Heart left ventricle (tissue), 16 donors: ENCODE measurements at regions of chr11 and their contacts with region 1.

Region 1: DNA sequence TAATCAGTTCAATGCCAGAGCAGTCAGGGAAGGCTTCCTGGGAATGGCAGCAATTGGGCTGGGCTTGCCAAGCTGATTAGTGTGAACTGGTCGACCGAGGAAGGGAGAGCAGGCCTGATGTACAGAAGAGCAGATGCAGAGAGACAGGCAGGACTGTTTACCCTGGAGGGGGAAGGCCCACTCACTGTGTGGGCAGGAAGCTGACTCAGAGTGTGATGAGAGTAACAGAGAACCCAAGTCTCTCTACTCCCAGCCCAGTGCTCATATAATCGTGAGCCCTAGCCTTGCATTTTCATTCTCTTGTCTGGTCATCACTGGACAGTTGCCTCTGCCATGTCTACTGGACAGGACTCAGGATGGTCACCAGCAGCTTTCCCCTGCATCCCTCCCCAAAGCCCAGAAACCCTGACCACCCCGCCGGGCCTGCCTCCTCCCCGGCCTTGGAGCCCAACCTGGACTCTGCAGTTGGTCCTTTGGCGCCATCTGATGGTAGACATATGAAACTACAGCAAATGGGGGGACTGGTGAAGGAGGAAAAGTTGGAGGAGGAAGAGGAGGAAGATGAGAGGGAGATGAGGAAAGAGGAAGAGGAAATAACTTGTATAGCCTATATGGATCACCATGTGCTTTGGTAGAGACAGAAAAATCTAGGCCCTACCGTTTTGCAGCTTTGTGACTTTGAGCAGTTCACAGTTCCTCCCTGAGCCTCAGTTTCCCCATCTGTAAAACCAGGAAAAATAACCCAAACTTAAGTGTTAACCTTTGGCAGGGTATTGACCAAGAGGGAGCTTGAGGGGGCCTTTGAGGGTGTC is 43.4 kb upstream of the PRDM11 start:
- DNase-seq: peak; percentile 58 to 81 (median 62)
- ATAC-seq: peak in 3 of 4 donors; percentile 62 to 81 (median 67)
- H3K4me3 ChIP-seq: no peak overlapping the region
- H3K27ac ChIP-seq: peak overlapping the region in 1 of 12 donors; percentile 66
- H3K4me1 ChIP-seq: peaks cover 0 to 25% (median 10%) of the 10 kb centered on the region in 12 donors
- H3K27me3 ChIP-seq: peaks cover 0 to 9% (median 0%) of the 10 kb centered on the region in 9 donors
- CTCF ChIP-seq: peak; percentile 85 to 99 (median 96)
- POLR2A ChIP-seq: no peak

Region 2: DNA sequence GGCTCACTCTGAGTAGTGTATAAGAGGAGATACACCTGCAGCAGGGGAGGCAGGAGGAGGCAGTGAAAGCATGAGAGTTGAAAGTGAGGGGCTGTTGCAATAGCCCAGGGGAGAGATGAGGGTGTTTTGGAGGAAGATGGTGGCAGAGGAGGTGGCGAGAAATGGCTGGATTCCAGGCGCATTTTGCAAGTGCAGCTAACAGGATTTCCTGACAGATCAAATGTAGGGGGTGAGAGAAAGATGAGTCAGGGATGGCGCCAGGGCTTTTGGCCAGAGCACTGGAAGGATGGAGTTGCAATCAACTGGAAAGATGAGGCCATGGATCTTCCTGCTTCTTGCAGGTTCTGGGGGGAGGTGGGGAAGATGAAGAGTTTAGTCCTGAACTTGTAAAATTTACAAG is 393.1 kb before region 1 on chr11:
- intact Hi-C with region 1: loop called in 1 of 10 experiments (anchors 10 kb)
- DNase-seq: no peak
- ATAC-seq: no peak
- H3K4me3 ChIP-seq: no peak overlapping the region
- H3K27ac ChIP-seq: no peak overlapping the region
- H3K4me1 ChIP-seq: peaks cover 0 to 7% (median 0%) of the 10 kb centered on the region in 12 donors
- H3K27me3 ChIP-seq: no peaks in the 10 kb centered on the region
- CTCF ChIP-seq: no peak
- POLR2A ChIP-seq: no peak

Region 3: DNA sequence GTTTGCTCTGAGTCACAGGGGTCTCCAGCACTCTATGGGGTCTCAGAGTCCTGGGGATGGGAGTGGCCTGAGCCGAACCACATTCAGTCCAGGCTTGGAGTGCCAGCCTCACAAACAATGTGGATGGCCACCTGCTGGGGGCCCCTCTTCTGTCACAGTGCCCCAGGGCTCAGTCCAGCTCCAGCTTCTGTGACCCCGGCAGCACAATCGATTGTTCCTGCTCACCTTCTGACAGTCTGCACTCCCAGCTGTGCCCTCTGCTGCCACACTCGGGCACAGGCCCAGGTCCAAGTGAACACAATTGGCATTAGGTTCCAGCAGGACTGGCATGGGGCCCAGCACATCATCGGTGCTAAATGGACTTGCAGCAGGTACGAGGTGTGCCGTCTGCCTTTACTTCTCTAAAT is 237.1 kb before region 1 on chr11:
- intact Hi-C with region 1: no loop called
- DNase-seq: peak; percentile 67 to 81 (median 78)
- ATAC-seq: peak; percentile 29 to 62 (median 52)
- H3K4me3 ChIP-seq: no peak overlapping the region
- H3K27ac ChIP-seq: peak overlapping the region in 9 of 12 donors; percentile 41 to 79 (median 60)
- H3K4me1 ChIP-seq: peaks cover 0 to 54% (median 20%) of the 10 kb centered on the region in 12 donors
- H3K27me3 ChIP-seq: no peaks in the 10 kb centered on the region
- CTCF ChIP-seq: peak in 4 of 12 donors; percentile 12 to 40 (median 23)
- POLR2A ChIP-seq: no peak

Region 4: GRCh38 chr11:44927174-44927661 is 175.8 kb before region 1 on chr11:
- intact Hi-C with region 1: loop called in 2 of 10 experiments (anchors 2 kb)
- DNase-seq: peak in 4 of 5 donors; percentile 61 to 83 (median 64)
- ATAC-seq: peak; percentile 24 to 57 (median 40)
- H3K4me3 ChIP-seq: no peak overlapping the region
- H3K27ac ChIP-seq: no peak overlapping the region
- H3K4me1 ChIP-seq: peaks cover 0 to 24% (median 9%) of the 10 kb centered on the region in 12 donors
- H3K27me3 ChIP-seq: no peaks in the 10 kb centered on the region
- CTCF ChIP-seq: peak; percentile 77 to 91 (median 86)
- POLR2A ChIP-seq: no peak

Region 5: GRCh38 chr11:44950625-44951476 is 152.2 kb before region 1 on chr11 and contains the start of gene TP53I11:
- intact Hi-C with region 1: loop called in 1 of 10 experiments (anchors 5 kb)
- DNase-seq: peak; percentile 89 to 94 (median 91)
- ATAC-seq: peak; percentile 69 to 91 (median 83)
- H3K4me3 ChIP-seq: peak within 1 kb of the TSS; percentile 47 to 97 (median 88)
- H3K27ac ChIP-seq: peak within 1 kb of the TSS; percentile 63 to 91 (median 84)
- H3K4me1 ChIP-seq: peaks cover 0 to 68% (median 44%) of the 10 kb centered on the region in 12 donors
- H3K27me3 ChIP-seq: no peaks in the 10 kb centered on the region
- CTCF ChIP-seq: peak; percentile 61 to 96 (median 90)
- POLR2A ChIP-seq: peak in 1 of 2 donors; percentile 92
- total RNA-seq, gene TP53I11: 24.0 to 75.0 (median 39.4) TPM

Region 6: DNA sequence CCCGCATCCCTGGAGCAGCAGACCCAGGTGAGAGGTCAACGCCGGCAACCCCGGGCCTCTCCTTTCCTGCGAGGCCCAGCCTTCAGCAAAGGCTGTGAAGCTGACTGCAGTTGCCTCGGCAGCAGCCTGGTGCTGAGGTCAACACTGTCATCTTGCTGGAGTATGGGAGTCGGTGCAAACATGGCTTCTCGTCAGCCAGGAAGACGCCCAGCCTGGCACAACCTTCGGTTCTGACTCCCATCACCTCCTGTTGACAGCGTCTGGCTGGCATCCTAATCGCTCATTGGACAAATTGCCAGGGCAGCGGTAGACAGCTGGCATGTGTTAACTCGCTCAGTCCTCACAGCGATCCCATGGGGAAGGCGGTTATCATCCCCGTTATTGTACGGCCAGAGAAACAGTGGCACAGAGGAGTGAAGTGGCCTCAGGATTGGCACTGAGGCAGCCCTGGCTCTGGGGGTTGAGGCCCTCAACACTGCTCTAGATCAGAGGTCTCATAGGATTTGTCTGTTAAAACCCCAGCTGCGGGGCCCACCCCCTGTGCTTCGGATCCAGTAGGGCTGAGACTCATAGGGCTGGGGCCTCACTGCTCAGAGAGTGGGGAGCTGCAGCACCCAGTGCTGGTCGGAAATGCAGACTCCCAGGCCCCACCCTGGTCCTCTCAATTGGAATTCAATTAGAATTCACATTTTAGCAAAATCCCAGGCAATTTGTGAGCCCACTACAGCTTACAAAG is 113.0 kb before region 1 on chr11:
- intact Hi-C with region 1: no loop called
- DNase-seq: peak; percentile 83 to 93 (median 86)
- ATAC-seq: peak; percentile 90 to 94 (median 93)
- H3K4me3 ChIP-seq: no peak overlapping the region
- H3K27ac ChIP-seq: peak overlapping the region in 11 of 12 donors; percentile 7 to 78 (median 60)
- H3K4me1 ChIP-seq: peaks cover 0 to 36% (median 16%) of the 10 kb centered on the region in 12 donors
- H3K27me3 ChIP-seq: no peaks in the 10 kb centered on the region
- CTCF ChIP-seq: no peak
- POLR2A ChIP-seq: no peak

Region 7: GRCh38 chr11:45332276-45332934 is 229.4 kb after region 1 on chr11:
- intact Hi-C with region 1: loop called in 1 of 10 experiments (anchors 5 kb)
- DNase-seq: peak in 1 of 5 donors; percentile 38
- ATAC-seq: peak; percentile 57 to 70 (median 69)
- H3K4me3 ChIP-seq: peak overlapping the region in 9 of 12 donors; percentile 1 to 44 (median 35)
- H3K27ac ChIP-seq: peak overlapping the region; percentile 55 to 80 (median 73)
- H3K4me1 ChIP-seq: peaks cover 0 to 22% (median 5%) of the 10 kb centered on the region in 12 donors
- H3K27me3 ChIP-seq: no peaks in the 10 kb centered on the region
- CTCF ChIP-seq: peak; percentile 74 to 93 (median 88)
- POLR2A ChIP-seq: no peak